GM10248 (cell line): ENCODE measurements at regions of chr10 and their contacts with region 1.

Region 1: DNA sequence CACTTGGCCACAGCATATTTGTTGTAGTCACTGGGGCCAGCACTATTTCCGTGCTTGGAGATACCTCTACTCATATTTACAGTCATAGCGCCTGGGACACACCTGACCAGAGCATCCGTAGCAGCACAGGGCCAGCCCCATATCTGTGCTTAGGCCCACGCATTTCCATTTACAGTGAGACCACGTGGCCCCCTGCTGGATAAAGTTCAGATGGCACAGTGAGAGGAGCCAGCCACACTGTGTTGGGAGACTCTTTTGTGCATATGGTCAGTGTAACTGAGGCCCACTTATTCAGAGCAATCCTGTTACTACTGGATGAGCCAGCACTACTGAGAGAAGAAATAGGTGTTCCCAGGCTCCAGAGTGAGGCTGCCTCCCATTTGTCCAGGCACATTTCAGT is 455.3 kb downstream of the REEP3 start:
- DNase-seq: peak; percentile 58
- CTCF ChIP-seq: peak; percentile 50

Region 2: GRCh38 chr10:63987212-63987611 is 10.7 kb after region 1 on chr10:
- CTCF ChIA-PET with region 1: interaction called, 17 read pairs
- POLR2A ChIA-PET with region 1: no interaction called
- DNase-seq: no peak
- CTCF ChIP-seq: no peak

Region 3: DNA sequence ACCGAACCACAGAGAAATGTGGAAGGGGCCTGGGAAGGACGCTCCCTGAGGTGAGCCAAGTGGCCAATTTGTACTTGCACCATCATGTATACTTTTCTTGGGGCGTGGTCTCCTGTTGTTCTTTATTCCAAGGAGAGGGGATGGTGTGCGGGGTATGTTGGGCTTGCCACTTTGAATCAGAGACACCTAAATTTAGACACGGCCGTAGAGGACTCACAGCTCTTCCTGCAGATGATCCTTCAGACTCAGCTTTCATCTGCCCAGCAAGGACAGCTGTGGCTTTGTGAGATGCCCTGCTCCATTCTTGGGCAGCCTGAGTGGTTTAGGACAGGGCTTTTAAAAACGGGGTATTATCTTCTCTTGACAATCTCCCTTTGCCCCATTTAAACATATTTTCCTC is 17.8 kb after region 1 on chr10:
- CTCF ChIA-PET with region 1: interaction called, 17 read pairs
- POLR2A ChIA-PET with region 1: no interaction called
- DNase-seq: no peak
- CTCF ChIP-seq: no peak

Region 4: DNA sequence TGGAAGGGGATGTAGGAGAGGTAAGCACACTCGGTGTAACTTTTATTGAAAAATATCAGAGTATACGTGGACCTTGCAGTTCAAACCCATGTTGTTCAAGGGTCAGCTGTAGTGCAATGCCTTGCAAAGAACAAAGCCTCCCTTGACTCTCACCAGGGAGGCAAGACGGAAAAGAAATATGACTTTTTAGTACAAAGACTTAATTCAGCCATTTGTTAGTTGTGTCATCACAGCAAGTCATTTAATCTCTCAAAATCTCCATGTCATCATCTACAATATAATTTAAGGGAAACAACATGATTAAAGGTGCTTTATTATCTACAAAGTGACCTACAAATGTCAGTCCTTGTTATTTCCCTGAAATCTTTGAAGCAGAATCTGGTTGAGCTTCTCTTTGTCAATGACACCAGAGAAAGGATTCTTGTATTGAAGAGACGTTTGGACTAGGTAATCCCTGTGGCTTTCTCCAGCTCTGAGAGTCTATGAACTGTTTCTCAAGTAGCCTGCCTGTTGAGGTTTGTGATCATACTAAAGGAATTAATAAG is 47.5 kb after region 1 on chr10:
- CTCF ChIA-PET with region 1: no interaction called
- POLR2A ChIA-PET with region 1: no interaction called
- DNase-seq: no peak
- CTCF ChIP-seq: no peak